Activated CD4-positive, alpha-beta T cell treated with anti-CD3 and anti-CD28 coated beads for 36 hours (primary cell): ENCODE measurements at regions of chr15 and their contacts with region 1.

Region 1: GRCh38 chr15:86231864-86232721 is 152.4 kb downstream of the AGBL1 start:
- DNase-seq: peak; percentile 49
- ATAC-seq: peak; percentile 65
- H3K4me3 Mint-ChIP-seq: no peak overlapping the region
- H3K27ac Mint-ChIP-seq: no peak overlapping the region
- H3K4me1 Mint-ChIP-seq: no peaks in the 10 kb centered on the region
- H3K27me3 Mint-ChIP-seq: peaks cover 33% of the 10 kb centered on the region

Region 2: DNA sequence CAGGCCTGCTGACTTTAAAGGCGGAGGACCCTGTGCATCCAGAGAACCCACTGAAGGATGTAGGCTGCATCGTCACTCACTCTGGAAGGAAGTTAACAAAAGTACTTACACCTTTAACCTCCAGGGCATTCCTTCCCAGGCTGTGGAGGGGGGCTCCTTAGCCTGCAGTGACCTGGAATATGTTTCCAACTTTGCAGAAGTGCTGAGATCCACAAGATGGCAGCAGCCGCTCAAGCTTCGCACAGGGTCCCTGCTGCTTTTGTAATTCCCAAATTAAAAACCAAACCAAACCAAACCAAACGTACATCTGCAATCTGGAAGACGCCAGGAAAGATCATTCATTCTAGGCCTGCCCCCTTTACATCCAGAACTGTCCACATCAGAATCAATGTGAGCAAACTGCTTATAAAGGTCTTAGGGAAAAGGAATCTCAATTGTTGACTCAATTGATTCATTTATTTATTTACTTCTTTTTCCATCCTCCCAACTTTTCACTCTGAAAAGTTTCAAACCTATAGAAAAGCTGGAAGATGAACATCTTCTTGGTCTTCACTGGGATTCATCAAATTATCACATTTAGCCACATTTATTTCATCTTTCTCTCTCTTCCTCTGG is 366.9 kb before region 1 on chr15:
- CTCF ChIA-PET with region 1: no interaction called
- POLR2A ChIA-PET with region 1: no interaction called
- intact Hi-C with region 1: loop called in 1 of 2 experiments (anchors 5 kb)
- DNase-seq: peak; percentile 43
- ATAC-seq: no peak
- H3K4me3 Mint-ChIP-seq: no peak overlapping the region
- H3K27ac Mint-ChIP-seq: no peak overlapping the region
- H3K4me1 Mint-ChIP-seq: peaks cover 4% of the 10 kb centered on the region
- H3K27me3 Mint-ChIP-seq: peaks cover 8% of the 10 kb centered on the region

Region 3: DNA sequence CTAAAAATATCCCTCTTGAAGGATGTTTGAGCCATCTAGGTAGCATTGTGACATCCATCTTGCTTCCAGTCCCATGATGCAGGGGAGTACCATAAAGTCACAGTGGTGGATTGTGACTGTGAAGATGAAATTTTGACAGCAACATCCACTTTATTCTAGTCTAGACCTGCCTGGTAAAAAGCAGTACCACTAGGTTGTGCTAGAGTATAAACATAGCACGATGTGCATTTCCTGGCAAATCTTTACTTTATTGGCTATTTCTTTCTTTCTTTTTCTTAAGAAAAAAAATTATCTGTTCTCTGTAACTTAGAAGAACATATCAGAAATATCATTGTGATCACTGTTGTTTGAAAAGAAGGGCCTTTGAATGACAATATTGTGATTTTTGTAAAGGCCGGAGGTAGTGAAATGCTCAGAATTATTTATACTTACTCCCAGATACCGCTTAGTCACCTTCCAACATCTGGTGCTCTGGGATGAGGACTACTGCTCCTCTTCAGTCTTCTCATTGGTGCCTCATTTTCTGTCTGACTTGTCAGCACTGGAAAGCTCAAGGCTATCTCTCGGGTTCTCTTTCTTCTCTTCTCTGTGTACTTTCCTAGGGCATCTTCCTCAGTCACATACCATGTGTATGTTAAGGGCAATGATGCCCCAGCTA is 116.8 kb before region 1 on chr15:
- CTCF ChIA-PET with region 1: no interaction called
- POLR2A ChIA-PET with region 1: no interaction called
- intact Hi-C with region 1: no loop called
- DNase-seq: no peak
- ATAC-seq: no peak
- H3K4me3 Mint-ChIP-seq: no peak overlapping the region
- H3K27ac Mint-ChIP-seq: no peak overlapping the region
- H3K4me1 Mint-ChIP-seq: no peaks in the 10 kb centered on the region
- H3K27me3 Mint-ChIP-seq: no peaks in the 10 kb centered on the region

Region 4: GRCh38 chr15:86183596-86184491 is 48.2 kb before region 1 on chr15:
- CTCF ChIA-PET with region 1: interaction called, 3 read pairs
- POLR2A ChIA-PET with region 1: no interaction called
- intact Hi-C with region 1: loop called in 1 of 2 experiments (anchors 5 kb)
- DNase-seq: peak; percentile 67
- ATAC-seq: peak; percentile 93
- H3K4me3 Mint-ChIP-seq: no peak overlapping the region
- H3K27ac Mint-ChIP-seq: no peak overlapping the region
- H3K4me1 Mint-ChIP-seq: peaks cover 11% of the 10 kb centered on the region
- H3K27me3 Mint-ChIP-seq: peaks cover 22% of the 10 kb centered on the region

Region 5: DNA sequence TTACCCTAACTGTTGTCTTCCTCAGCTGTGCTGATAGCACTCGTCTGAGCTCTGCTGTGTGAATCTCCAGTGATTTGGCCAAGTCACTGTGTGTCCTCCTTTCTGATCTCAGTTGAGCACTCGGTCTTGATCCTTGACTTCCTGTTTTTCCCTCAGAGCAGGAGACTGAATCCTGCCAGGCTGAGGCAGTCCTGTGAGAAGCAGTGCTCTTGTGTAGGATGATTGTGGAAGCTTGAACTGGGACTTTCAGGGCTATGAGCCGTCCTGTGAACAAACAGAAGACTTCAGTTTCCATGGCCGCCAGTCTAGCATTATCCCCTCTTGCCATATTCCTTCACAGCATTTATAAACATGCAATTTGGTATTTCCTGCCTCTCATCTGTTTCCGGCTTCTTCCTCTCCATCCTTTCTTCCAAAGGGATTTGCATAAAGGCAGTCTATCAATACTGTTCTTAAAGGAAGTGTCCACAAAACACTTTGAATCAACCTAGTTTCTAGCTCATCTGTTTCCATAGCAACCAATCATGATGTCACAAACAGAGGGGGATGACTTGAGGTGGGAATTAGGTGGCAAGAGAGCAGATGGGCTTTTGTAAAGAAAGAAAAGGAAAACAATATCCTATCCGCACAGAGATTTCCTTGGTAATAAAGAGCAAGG is 84.8 kb after region 1 on chr15:
- CTCF ChIA-PET with region 1: no interaction called
- POLR2A ChIA-PET with region 1: no interaction called
- intact Hi-C with region 1: no loop called
- DNase-seq: no peak
- ATAC-seq: no peak
- H3K4me3 Mint-ChIP-seq: no peak overlapping the region
- H3K27ac Mint-ChIP-seq: no peak overlapping the region
- H3K4me1 Mint-ChIP-seq: peaks cover 13% of the 10 kb centered on the region
- H3K27me3 Mint-ChIP-seq: peaks cover 21% of the 10 kb centered on the region

Region 6: DNA sequence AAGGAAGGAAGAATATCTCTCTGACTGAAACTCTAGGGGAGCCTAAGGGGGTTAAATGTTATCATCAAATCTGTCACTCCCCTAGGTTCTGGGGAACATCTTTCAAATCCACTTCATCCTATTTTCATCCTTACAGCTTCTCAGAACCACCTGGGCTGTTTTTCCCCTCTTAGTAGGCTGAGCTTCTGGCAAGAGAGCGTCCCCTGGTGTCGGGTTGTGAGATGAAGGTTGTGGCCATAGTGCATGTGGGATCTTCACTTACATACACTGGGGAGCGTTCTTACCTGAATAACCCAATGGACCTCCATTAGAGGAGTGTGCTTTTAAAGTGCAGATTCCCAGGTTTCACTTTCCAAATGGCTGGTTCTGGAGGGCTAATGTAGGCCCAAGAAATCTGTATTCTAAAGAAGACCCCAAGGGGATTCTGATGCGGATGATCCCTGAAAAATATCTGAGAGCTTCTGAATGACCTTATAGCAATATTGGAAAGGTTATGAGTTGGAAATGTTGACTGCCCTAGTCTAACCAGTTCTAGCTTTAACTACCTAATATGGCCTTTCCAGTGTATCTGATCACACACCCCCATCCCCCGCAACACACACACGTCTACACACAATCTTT is 511.3 kb after region 1 on chr15:
- CTCF ChIA-PET with region 1: interaction called, 3 read pairs
- POLR2A ChIA-PET with region 1: no interaction called
- intact Hi-C with region 1: loop called (anchors 1 to 5 kb)
- DNase-seq: peak; percentile 77
- ATAC-seq: peak; percentile 70
- H3K4me3 Mint-ChIP-seq: no peak overlapping the region
- H3K27ac Mint-ChIP-seq: no peak overlapping the region
- H3K4me1 Mint-ChIP-seq: peaks cover 2% of the 10 kb centered on the region
- H3K27me3 Mint-ChIP-seq: no peaks in the 10 kb centered on the region